GM10248 (cell line): ENCODE measurements at regions of chr16 and their contacts with region 1.

Region 1: GRCh38 chr16:29664091-29664921 is 1.3 kb downstream of the SPN start:
- DNase-seq: peak; percentile 46
- CTCF ChIP-seq: no peak

Region 2: DNA sequence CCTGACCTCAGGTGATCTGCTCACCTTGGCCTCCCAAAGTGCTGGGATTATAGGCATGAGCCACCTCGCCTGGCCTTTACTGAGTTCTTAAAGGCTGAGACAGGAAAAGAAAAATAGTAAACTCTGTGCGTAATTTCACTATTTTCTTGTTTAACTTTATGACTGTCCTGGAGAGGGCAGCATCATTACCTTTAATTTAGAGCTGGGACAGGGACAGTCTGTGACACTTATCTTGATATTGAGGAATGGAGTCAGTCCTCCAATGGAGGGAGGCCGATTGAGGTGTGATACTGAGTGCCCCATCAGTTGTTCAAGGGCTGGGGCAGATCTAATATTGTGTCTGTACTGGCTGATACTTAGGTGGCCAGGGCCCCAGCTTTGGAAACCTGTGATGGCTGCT is 22.7 kb before region 1 on chr16:
- CTCF ChIA-PET with region 1: interaction called, 13 read pairs
- POLR2A ChIA-PET with region 1: no interaction called
- DNase-seq: peak; percentile 52
- CTCF ChIP-seq: peak; percentile 31

Region 3: GRCh38 chr16:29708917-29709600 is 44.8 kb after region 1 on chr16:
- CTCF ChIA-PET with region 1: no interaction called
- POLR2A ChIA-PET with region 1: no interaction called
- DNase-seq: no peak
- CTCF ChIP-seq: no peak

Region 4: DNA sequence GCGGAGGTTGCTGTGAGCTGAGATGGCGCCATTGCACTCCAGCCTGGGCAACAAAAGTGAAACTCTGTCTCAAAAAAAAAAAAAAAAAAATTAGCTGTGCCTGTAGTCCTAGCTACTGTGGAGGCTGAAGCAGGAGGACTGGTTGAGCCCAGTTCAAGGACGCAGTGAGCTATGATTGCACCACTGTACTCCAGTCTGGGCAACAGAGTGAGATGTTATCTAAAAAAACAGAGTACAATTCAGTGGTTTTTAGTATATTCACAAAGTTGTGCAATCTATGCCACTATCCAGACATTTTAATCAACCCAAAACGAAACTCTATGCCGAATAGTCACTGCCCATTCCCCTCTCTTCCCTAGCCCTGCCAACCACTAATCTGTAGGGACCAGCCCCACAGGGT is 56.4 kb after region 1 on chr16:
- CTCF ChIA-PET with region 1: no interaction called
- POLR2A ChIA-PET with region 1: no interaction called
- DNase-seq: no peak
- CTCF ChIP-seq: no peak

Region 5: DNA sequence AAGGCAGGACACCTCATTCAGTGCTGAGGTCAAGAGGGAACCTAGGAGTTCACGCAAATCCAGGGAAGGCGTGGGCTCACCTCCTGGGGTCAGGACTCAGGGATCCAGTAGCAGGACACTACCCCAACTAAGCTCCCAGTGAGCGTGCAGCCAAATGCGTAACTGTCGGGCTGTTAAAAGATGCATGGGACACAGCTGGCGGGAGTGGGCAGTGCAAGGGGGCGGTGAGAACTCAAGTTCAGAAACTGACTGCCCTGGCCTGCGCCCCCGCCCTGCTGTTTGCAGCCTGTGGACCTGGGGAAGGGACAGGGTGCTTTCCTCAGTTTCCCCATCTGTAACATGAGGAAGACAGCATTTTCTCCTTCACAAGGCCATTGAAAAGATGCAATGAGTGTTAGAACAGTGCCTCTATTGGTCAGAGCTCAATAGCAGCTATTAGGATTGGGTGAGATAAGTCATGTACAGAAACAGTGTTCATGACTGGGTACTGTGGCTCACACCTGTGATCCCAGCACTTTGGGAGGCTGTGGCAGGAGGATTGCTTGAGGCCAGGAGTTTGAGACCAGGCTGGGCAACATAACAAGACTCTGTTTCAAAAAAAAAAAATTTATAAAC is 178.5 kb after region 1 on chr16:
- CTCF ChIA-PET with region 1: no interaction called
- POLR2A ChIA-PET with region 1: no interaction called
- DNase-seq: no peak
- CTCF ChIP-seq: no peak